ENCODE measurements at regions of chr14 and their contacts with region 1.

Region 1: GRCh38 chr14:64253672-64254071 is 40.5 kb downstream of the ESR2 start:
- DNase-seq: no peak
- ATAC-seq: no peak
- H3K4me3 Mint-ChIP-seq: no peak overlapping the region
- H3K27ac Mint-ChIP-seq: no peak overlapping the region
- H3K4me1 Mint-ChIP-seq: no peaks in the 10 kb centered on the region
- H3K27me3 Mint-ChIP-seq: no peaks in the 10 kb centered on the region
- CTCF ChIP-seq: no peak

Region 2: DNA sequence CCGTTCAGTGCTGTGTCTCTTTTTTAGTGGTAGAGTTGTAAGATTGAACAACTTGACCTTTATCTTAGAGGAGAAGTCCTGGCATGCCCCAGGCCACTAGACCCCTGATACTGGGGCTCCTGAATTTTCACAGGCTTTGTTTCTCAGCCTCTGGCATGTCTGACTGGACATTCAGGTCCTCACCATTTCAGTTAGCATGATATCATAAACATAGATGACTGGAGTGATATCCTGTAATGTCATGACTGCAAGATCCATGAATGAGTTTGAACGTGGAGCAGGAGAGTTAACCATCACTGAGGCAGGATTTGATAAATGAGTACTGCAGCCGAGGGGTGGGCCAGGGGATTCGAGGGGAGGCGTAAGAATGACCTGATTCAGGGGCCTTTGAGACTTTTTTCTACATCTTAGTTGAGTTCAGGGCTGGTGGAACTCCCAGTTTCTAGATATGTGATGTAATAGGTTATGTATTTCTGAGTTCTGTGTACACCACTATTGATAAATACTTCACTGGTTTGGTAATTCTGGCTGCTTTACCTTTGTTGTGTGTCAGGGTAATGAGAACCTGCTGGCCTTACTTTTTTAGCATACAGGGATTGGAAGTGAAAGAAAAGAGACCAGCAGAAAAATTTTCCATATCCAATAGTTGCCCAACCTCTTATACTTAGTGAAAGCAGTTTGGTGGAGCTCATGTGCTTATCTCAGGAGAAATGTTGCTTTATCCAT is 183.9 kb before region 1 on chr14:
- CTCF ChIA-PET with region 1: no interaction called
- POLR2A ChIA-PET with region 1: no interaction called
- intact Hi-C with region 1: no loop called
- DNase-seq: no peak
- ATAC-seq: no peak
- H3K4me3 Mint-ChIP-seq: no peak overlapping the region
- H3K27ac Mint-ChIP-seq: no peak overlapping the region
- H3K4me1 Mint-ChIP-seq: no peaks in the 10 kb centered on the region
- H3K27me3 Mint-ChIP-seq: no peaks in the 10 kb centered on the region
- CTCF ChIP-seq: no peak

Region 3: DNA sequence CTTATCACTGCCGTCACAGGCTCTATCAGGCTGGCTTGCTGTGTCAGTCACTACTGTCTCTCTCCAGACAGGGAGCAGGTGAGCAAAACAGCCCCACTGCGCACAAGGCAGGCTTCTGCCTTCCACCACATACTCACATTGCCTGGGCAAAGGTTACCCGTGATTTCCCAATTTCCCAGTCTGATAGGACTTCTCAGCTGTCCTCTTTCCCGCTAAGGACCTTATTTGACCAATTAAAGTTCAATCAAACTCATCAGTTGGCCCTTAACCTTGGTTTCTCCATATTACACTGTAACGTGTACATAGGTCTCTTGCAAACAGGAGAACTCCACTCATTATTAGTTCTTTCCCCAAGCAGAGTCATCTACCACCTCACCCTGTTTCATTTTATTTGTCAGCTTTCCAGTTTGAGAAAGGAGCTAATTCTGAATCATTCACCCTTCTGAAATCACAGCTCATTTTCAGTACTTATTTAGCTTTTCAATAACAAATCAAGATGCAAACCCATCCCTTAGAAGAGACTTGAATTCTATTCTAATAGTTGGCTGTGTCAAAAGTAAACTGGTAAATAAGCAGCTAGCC is 130.3 kb before region 1 on chr14:
- CTCF ChIA-PET with region 1: no interaction called
- POLR2A ChIA-PET with region 1: no interaction called
- intact Hi-C with region 1: no loop called
- DNase-seq: no peak
- ATAC-seq: no peak
- H3K4me3 Mint-ChIP-seq: no peak overlapping the region
- H3K27ac Mint-ChIP-seq: no peak overlapping the region
- H3K4me1 Mint-ChIP-seq: no peaks in the 10 kb centered on the region
- H3K27me3 Mint-ChIP-seq: no peaks in the 10 kb centered on the region
- CTCF ChIP-seq: no peak

Region 4: GRCh38 chr14:64266239-64266638 is 12.6 kb after region 1 on chr14:
- CTCF ChIA-PET with region 1: no interaction called
- POLR2A ChIA-PET with region 1: interaction called, 3 read pairs
- intact Hi-C with region 1: loop called (anchors 2 kb)
- DNase-seq: no peak
- ATAC-seq: peak; percentile 61
- H3K4me3 Mint-ChIP-seq: no peak overlapping the region
- H3K27ac Mint-ChIP-seq: no peak overlapping the region
- H3K4me1 Mint-ChIP-seq: peaks cover 26% of the 10 kb centered on the region
- H3K27me3 Mint-ChIP-seq: no peaks in the 10 kb centered on the region
- CTCF ChIP-seq: no peak